ENCODE measurements at regions of chr2 and their contacts with region 1.

Region 1: DNA sequence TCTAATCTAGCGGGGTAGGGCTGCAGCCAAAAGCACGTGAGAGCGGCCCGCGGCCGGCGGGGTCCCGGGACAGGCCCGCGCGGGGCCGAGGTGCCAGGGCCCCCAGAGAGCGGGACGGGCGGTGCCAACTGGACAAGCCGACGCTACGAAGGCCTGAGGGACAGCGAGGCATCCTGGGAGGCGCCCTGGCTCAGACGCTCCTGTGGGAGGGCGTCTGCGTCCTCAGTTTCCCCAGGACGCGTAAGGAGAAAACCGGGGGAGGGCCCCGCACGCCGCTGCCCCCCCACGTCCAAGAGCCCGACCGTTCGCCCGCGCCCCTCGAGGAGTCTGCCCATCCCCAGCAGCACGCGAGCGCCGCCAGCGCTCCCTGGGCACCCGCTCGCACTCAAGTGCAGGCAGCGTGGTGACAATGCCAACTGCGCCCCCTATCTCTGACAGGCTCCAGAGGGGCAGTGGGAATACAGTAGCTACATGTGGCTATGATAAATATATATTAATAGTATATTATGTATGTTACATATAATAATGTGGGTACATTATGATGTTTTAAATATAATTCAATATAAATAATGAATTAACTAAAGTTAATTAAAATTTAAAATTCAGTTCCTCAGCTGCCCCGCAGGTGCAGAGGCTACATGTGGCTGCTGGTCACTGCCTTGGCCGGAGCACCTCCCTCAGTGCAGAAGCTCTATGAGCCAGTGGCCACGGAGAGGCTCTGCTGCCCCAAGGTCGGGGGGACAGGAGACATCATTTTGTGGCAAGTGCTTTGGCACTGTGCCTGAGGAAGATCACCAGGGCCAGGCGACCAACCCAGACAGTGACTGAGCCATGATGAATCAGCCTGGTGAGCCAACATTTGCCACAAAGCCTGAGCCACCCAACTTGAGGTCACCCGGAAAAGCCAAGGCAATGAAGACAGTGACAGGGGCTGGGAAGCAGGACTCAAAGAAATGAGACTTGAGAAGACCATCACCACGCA is 5.5 kb upstream of the SFT2D3 start:
- DNase-seq: peak; percentile 90
- H3K4me3 ChIP-seq: peak overlapping the region in 1 of 2 experiments; percentile 36; a peak in 2 of 4 replicates
- H3K27ac ChIP-seq: no peak overlapping the region
- H3K4me1 ChIP-seq: peaks cover 0 to 11% of the 10 kb centered on the region in 2 experiments; a peak in 2 of 4 replicates
- H3K27me3 ChIP-seq: no peaks in the 10 kb centered on the region
- CTCF ChIP-seq: peak; percentile 46
- EP300 ChIP-seq: no peak
- RAD21 ChIP-seq: peak; percentile 76

Region 2: DNA sequence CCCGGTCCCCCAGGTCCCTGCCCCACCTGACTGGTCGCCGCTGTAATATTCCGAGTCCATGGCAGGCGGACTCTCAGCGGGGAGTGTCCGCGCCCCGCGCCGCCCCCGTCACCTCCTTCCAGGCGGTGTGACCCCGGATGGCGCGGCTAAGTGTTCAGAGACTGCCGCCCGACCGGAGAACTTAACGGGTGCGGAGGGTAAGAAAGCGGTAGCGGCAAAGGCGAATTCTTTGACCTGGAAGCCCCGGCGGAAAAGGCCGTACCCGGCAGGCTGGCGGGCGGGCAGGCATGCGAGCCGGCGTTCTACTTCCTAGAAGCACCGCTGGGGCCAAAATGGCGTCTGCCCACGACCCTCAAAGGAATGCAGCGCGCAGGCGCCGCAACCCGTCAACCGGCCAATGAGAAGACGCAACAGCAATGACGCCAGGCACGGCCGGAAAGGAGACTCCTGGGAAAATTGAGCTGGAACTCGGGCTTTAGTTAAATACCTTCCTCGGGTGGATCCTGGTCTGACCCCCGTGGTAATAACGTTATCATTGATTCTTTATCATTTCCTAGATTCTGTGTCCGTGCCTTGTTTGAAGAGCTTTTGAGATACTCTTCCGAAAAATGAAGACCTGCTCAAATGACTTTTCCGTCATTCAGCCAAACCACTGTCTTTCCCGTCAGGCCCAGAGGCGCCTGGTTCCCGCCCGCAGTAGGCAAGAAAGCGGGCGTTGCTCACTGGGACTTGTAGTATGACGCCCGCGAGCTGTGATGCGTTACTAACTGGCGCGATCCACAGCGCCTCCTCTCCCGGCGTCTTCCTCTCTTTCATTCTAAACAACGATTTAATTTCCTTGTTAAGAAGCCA is 169.4 kb before region 1 on chr2 and contains the start of gene IWS1:
- CTCF ChIA-PET with region 1: interaction called, 10 read pairs
- POLR2A ChIA-PET with region 1: no interaction called
- DNase-seq: peak; percentile 94
- H3K4me3 ChIP-seq: peak within 1 kb of the TSS; percentile 76 to 94
- H3K27ac ChIP-seq: peak within 1 kb of the TSS; percentile 94 to 96
- H3K4me1 ChIP-seq: peaks cover 0 to 10% of the 10 kb centered on the region in 2 experiments; a peak in 2 of 4 replicates
- H3K27me3 ChIP-seq: no peaks in the 10 kb centered on the region
- CTCF ChIP-seq: peak; percentile 26; the same call in 1 of the 2 replicates
- EP300 ChIP-seq: no peak
- RAD21 ChIP-seq: peak; percentile 26
- polyA plus RNA-seq, gene IWS1: 24.6 and 30.0 TPM in 2 replicates

Region 3: DNA sequence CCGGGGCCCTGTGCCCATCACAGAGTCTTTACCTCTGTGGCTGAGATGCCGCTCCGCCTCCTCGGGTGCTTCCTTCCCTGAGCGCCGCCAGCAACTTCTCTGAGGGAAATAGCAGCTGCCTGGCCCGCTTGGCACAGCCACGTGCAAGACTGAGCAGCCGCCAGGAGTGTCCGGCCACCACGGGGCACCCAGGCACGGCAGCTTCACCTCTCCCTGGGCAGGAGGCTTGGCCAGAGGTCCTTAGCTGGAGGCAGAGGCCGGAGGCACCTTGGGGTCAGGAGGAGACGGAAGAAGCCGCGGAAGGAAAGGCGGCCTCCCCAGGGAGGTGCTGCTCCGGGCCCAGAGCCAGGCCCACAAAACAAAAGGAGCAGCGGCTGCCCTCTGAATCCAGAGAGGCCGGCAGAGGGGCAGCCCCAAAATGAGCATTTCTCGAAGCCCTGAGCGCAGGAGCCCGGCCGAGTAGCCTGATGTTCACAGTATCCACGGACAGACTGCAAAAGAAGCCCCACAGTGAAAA is 14.4 kb before region 1 on chr2:
- CTCF ChIA-PET with region 1: interaction called, 19 read pairs
- POLR2A ChIA-PET with region 1: interaction called, 7 read pairs
- DNase-seq: peak; percentile 22
- H3K4me3 ChIP-seq: no peak overlapping the region
- H3K27ac ChIP-seq: no peak overlapping the region
- H3K4me1 ChIP-seq: peaks cover 0 to 4% of the 10 kb centered on the region in 2 experiments; a peak in 1 of 4 replicates
- H3K27me3 ChIP-seq: peaks cover 14% of the 10 kb centered on the region; the same call in 1 of the 2 replicates
- CTCF ChIP-seq: no peak
- EP300 ChIP-seq: no peak
- RAD21 ChIP-seq: no peak

Measured in SK-N-SH (cell line).